PC-3 (cell line): ENCODE measurements at regions of chr1 and their contacts with region 1.

Region 1: GRCh38 chr1:99758073-99758511 is 8.3 kb downstream of the FRRS1 start:
- DNase-seq: no peak
- ATAC-seq: no peak; the same call in 1 of the 2 replicates
- H3K4me3 ChIP-seq: no peak overlapping the region
- H3K27ac ChIP-seq: no peak overlapping the region
- H3K4me1 ChIP-seq: peaks cover 31% of the 10 kb centered on the region
- H3K27me3 ChIP-seq: no peaks in the 10 kb centered on the region
- CTCF ChIP-seq: no peak

Region 2: GRCh38 chr1:99801584-99801983 is 43.5 kb after region 1 on chr1:
- CTCF ChIA-PET with region 1: no interaction called
- POLR2A ChIA-PET with region 1: no interaction called
- intact Hi-C with region 1: no loop called
- DNase-seq: no peak
- ATAC-seq: no peak
- H3K4me3 ChIP-seq: no peak overlapping the region
- H3K27ac ChIP-seq: no peak overlapping the region
- H3K4me1 ChIP-seq: no peaks in the 10 kb centered on the region
- H3K27me3 ChIP-seq: peaks cover 27% of the 10 kb centered on the region
- CTCF ChIP-seq: no peak

Region 3: DNA sequence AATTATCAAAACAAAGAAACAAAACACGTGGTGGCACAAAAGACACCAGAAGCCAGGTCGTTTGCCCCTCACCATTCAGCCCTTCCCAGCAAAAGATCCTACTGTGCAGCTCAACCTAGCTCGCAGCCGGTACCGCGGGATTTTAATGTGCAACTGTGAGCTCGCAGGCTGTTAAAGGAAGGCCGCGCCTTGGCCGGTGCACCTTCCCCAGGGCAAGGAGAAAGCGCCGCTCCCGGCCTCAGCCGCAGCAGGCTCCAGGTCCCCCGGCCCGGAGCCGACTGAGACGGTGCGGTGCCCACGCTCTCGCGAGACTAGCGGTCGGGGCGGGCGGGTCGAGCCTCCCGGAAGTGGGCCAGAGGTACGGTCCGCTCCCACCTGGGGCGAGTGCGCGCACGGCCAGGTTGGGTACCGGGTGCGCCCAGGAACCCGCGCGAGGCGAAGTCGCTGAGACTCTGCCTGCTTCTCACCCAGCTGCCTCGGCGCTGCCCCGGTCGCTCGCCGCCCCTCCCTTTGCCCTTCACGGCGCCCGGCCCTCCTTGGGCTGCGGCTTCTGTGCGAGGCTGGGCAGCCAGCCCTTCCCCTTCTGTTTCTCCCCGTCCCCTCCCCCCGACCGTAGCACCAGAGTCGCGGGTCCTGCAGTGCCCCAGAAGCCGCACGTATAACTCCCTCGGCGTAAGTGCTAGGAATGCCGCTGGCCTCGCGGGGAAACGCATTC is 91.8 kb after region 1 on chr1 and contains the start of gene AGL:
- CTCF ChIA-PET with region 1: no interaction called
- POLR2A ChIA-PET with region 1: interaction called, 10 read pairs
- intact Hi-C with region 1: no loop called
- DNase-seq: peak; percentile 85
- ATAC-seq: peak; percentile 91
- H3K4me3 ChIP-seq: peak within 1 kb of the TSS; percentile 98
- H3K27ac ChIP-seq: peak within 1 kb of the TSS; percentile 48
- H3K4me1 ChIP-seq: peaks cover 17% of the 10 kb centered on the region; the same call in 1 of the 2 replicates
- H3K27me3 ChIP-seq: no peaks in the 10 kb centered on the region
- CTCF ChIP-seq: no peak
- total RNA-seq, gene AGL: 8.7 and 9.8 TPM in 2 replicates

Region 4: GRCh38 chr1:99872063-99872462 is 114.0 kb after region 1 on chr1:
- CTCF ChIA-PET with region 1: no interaction called
- POLR2A ChIA-PET with region 1: no interaction called
- intact Hi-C with region 1: no loop called
- DNase-seq: no peak
- ATAC-seq: peak; percentile 58
- H3K4me3 ChIP-seq: no peak overlapping the region
- H3K27ac ChIP-seq: no peak overlapping the region
- H3K4me1 ChIP-seq: peaks cover 8% of the 10 kb centered on the region; the same call in 1 of the 2 replicates
- H3K27me3 ChIP-seq: no peaks in the 10 kb centered on the region
- CTCF ChIP-seq: no peak

Region 5: GRCh38 chr1:99886841-99887240 is 128.7 kb after region 1 on chr1:
- CTCF ChIA-PET with region 1: no interaction called
- POLR2A ChIA-PET with region 1: no interaction called
- intact Hi-C with region 1: no loop called
- DNase-seq: peak; percentile 76
- ATAC-seq: peak; percentile 77
- H3K4me3 ChIP-seq: no peak overlapping the region
- H3K27ac ChIP-seq: no peak overlapping the region
- H3K4me1 ChIP-seq: peaks cover 26% of the 10 kb centered on the region
- H3K27me3 ChIP-seq: no peaks in the 10 kb centered on the region
- CTCF ChIP-seq: no peak